ENCODE measurements at regions of chr22 and their contacts with region 1.

Region 1: DNA sequence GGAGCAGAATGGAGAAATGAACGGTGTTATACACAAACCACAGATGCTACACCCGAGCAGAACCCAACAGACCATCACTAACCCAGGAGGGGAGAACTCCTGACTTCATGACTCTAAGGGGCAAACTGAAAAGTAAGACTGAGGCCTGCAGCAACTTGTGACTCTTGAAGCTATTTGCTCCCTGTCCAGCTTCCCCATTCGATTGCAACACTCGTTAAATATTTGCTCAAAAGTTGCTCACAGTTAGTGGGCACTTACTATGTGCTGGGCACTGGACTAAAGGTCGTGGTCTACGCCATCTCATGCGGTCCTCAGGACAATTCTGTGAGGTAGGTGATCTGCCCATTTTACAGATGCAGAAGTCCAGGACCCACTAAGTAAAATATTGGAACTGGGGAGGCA is 9.5 kb upstream of the ADA2 start:
- DNase-seq: no peak
- ATAC-seq: no peak
- H3K4me3 ChIP-seq: no peak overlapping the region
- H3K27ac ChIP-seq: no peak overlapping the region
- H3K4me1 ChIP-seq: no peaks in the 10 kb centered on the region
- H3K27me3 ChIP-seq: no peaks in the 10 kb centered on the region

Region 2: GRCh38 chr22:17281440-17281841 is 52.7 kb after region 1 on chr22:
- intact Hi-C with region 1: no loop called
- DNase-seq: no peak
- ATAC-seq: no peak
- H3K4me3 ChIP-seq: no peak overlapping the region
- H3K27ac ChIP-seq: no peak overlapping the region
- H3K4me1 ChIP-seq: no peaks in the 10 kb centered on the region
- H3K27me3 ChIP-seq: no peaks in the 10 kb centered on the region

Region 3: GRCh38 chr22:17303840-17304779 is 75.4 kb after region 1 on chr22:
- intact Hi-C with region 1: loop called in 1 of 4 experiments (anchors 10 kb)
- DNase-seq: no peak
- ATAC-seq: no peak
- H3K4me3 ChIP-seq: no peak overlapping the region
- H3K27ac ChIP-seq: no peak overlapping the region
- H3K4me1 ChIP-seq: no peaks in the 10 kb centered on the region
- H3K27me3 ChIP-seq: no peaks in the 10 kb centered on the region

Measured in right cardiac atrium (tissue), 5 donors.